Common myeloid progenitor, CD34-positive (primary cell): ENCODE measurements at regions of chr15 and their contacts with region 1.

Region 1: DNA sequence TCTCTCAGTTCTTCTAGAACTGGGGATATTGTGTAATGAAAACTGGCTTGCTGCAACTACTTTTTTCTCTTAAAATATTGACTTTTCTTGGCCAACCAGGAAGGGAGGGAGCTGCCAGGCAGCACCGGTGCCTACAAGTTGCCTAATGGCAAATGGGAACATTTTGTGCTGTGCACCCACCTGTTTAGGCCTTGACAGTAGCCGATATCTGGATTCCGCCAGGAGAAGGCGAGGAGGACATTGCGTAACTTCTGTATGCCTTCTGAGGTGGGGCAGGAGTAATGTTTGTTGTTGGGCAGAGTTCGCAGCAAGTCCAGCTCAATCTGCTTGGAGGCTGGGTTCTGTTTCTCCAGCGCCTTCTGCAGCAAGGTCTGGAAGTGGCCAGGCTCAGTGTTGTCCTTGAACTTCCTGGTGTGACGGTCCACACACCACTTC is 64.9 kb downstream of the TBC1D2B start:
- DNase-seq: no peak
- H3K4me3 ChIP-seq: no peak overlapping the region
- H3K27ac ChIP-seq: no peak overlapping the region
- H3K4me1 ChIP-seq: peaks cover 0 to 4% (median under 1%) of the 10 kb centered on the region in 4 experiments
- H3K27me3 ChIP-seq: no peaks in the 10 kb centered on the region

Region 2: DNA sequence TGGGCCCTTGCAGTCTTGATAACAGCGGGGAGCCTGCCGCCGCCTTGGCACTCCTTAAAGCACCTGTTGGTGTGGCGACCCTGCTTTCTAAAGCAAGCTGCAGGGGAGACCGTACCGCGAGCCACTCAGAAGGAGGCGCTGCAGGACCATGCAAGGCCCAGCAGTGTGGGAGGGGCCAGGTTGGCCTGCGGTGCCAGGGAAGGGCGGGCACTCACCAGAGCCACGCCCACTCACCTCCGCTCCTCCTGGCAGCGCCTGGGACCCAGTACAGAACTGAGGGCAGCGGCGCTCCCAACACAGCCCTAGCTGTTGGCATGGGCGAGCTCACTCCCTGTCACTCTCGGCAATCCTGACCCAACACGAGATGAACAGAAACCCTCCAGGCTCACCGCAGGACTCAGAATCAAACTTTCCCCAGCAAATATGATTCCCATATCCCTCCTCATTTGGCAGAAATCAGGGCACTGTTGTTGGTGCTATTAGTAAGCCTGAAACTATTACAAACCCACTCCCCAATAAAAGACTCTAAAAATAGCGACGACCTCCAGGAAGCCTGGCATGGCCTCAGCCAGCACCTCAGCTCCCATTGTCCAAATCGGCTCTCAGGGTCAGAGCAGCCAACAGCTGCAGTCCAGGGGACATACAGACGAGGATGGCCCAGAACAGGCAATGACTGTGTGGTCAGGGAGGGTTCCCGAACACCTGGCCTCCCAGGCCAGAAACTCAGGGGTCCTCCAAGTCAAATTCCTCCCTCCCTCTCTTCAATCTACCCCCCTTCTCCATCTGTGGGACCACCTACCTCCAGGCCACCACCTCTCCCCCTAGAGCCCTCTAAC is 12.4 kb before region 1 on chr15:
- CTCF ChIA-PET with region 1: interaction called, 17 read pairs
- POLR2A ChIA-PET with region 1: no interaction called
- DNase-seq: peak; percentile 84 to 92 (median 87)
- H3K4me3 ChIP-seq: no peak overlapping the region
- H3K27ac ChIP-seq: no peak overlapping the region
- H3K4me1 ChIP-seq: peaks cover 0 to 6% (median under 1%) of the 10 kb centered on the region in 4 experiments
- H3K27me3 ChIP-seq: no peaks in the 10 kb centered on the region